ENCODE measurements at regions of chr3 and their contacts with region 1.

Region 1: DNA sequence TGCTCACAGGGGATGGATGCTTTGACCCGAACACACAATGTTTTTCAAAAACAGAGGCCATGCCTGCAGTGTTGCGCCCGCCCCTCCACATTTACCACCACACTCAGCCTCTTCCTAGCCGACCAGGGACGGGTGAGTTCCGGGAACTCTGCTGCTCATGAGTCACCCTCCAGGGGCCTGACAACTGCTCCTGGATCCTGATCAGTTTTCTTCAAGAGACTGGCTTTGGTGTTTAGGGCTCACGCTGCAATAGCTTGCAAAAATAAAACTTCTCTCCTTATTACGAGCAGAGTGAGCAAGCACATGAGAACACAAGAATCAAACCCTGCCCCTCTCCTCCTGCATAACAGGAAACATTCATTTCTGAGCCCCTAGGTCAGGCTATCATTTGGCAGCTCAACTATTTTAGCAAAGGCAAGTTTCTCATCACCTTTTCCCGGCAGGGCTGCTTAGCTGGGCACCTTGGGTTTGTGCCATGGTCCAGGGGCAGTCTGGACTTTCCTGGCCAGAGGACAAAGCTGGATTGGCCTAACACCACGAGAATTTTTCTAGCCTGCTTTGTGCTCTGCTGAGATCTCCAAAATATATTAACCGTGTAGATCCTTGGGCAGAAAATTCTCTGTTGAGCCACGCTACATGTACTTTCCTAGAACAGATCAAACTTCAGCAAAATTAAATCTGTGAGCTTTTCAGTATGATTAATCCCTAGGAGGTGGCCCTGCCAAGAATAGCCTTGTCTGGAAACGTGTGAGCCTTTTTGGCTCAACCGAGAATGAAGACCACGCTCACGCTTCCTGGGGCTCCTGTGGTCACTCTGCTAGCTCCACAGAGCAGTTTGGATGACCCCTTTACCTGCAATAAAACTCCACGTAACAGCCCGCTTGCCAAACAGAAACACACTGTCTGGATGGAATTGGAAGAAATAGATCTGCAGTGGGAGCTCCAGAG is 52.7 kb upstream of the SPATA12 start:
- DNase-seq: peak; percentile 97
- H3K4me3 ChIP-seq: peak overlapping the region; percentile 5 to 30 (median 16)
- H3K27ac ChIP-seq: peak overlapping the region; percentile 74 to 86 (median 79)
- H3K4me1 ChIP-seq: peaks cover 33 to 81% (median 68%) of the 10 kb centered on the region in 4 donors
- H3K27me3 ChIP-seq: no peaks in the 10 kb centered on the region
- CTCF ChIP-seq: no peak
- EP300 ChIP-seq: peak; percentile 65
- POLR2A ChIP-seq: no peak

Region 2: GRCh38 chr3:57068437-57069089 is 60.8 kb after region 1 on chr3:
- intact Hi-C with region 1: loop called (anchors 5 kb)
- DNase-seq: peak; percentile 93
- H3K4me3 ChIP-seq: no peak overlapping the region
- H3K27ac ChIP-seq: peak overlapping the region; percentile 59 to 78 (median 66)
- H3K4me1 ChIP-seq: peaks cover 11 to 29% (median 22%) of the 10 kb centered on the region in 4 donors
- H3K27me3 ChIP-seq: no peaks in the 10 kb centered on the region
- CTCF ChIP-seq: no peak
- EP300 ChIP-seq: no peak
- POLR2A ChIP-seq: no peak

Measured in esophagus muscularis mucosa (tissue), 4 donors.